Left ventricle myocardium inferior (tissue), 1 donor: ENCODE measurements at regions of chr1 and their contacts with region 1.

Region 1: DNA sequence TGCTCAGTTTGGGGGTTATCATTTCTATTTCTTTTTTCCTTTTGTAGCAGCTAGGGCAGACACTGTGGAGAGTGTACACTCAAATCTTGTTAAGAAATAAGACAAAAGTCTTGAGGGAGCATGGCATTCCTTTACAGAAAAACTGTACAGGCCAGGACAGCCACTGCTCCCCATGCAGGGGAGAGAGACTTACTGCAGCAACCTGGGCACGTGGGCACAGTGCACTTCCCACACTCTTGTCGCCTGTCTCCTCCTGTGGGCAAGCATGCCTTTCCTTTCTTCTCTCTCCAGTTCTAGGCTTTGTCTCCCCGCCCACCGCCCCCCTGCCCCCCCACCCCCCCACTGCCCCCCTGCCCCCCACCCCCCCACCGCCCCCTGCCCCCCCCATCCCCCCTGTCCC is 51.9 kb downstream of the PHC2 start:
- DNase-seq: no peak
- H3K4me3 ChIP-seq: no peak overlapping the region
- H3K27ac ChIP-seq: peak overlapping the region; percentile 77
- H3K4me1 ChIP-seq: peaks cover 77% of the 10 kb centered on the region
- H3K27me3 ChIP-seq: no peaks in the 10 kb centered on the region
- CTCF ChIP-seq: peak; percentile 13

Region 2: GRCh38 chr1:33455539-33456501 is 76.8 kb after region 1 on chr1:
- intact Hi-C with region 1: loop called (anchors 10 kb)
- DNase-seq: peak; percentile 38
- H3K4me3 ChIP-seq: no peak overlapping the region
- H3K27ac ChIP-seq: peak overlapping the region; percentile 46
- H3K4me1 ChIP-seq: peaks cover 32% of the 10 kb centered on the region
- H3K27me3 ChIP-seq: no peaks in the 10 kb centered on the region
- CTCF ChIP-seq: peak; percentile 67

Region 3: GRCh38 chr1:33575324-33575879 is 196.4 kb after region 1 on chr1:
- intact Hi-C with region 1: no loop called
- DNase-seq: peak; percentile 25
- H3K4me3 ChIP-seq: peak overlapping the region; percentile 26
- H3K27ac ChIP-seq: peak overlapping the region; percentile 92
- H3K4me1 ChIP-seq: peaks cover 77% of the 10 kb centered on the region
- H3K27me3 ChIP-seq: no peaks in the 10 kb centered on the region
- CTCF ChIP-seq: no peak